Activated CD4-positive, alpha-beta memory T cell treated with anti-CD3 and anti-CD28 coated beads for 36 hours (primary cell): ENCODE measurements at regions of chr2 and their contacts with region 1.

Region 1: GRCh38 chr2:149167411-149167810 is 128.9 kb downstream of the LYPD6B start:
- DNase-seq: peak; percentile 71
- H3K4me3 Mint-ChIP-seq: no peak overlapping the region
- H3K27ac Mint-ChIP-seq: no peak overlapping the region
- H3K4me1 Mint-ChIP-seq: peaks cover 19% of the 10 kb centered on the region
- H3K27me3 Mint-ChIP-seq: peaks cover 10% of the 10 kb centered on the region

Region 2: GRCh38 chr2:149068996-149069888 is 98.2 kb before region 1 on chr2:
- CTCF ChIA-PET with region 1: no interaction called
- POLR2A ChIA-PET with region 1: no interaction called
- intact Hi-C with region 1: loop called (anchors 5 kb)
- DNase-seq: peak; percentile 42
- H3K4me3 Mint-ChIP-seq: no peak overlapping the region
- H3K27ac Mint-ChIP-seq: no peak overlapping the region
- H3K4me1 Mint-ChIP-seq: peaks cover 19% of the 10 kb centered on the region
- H3K27me3 Mint-ChIP-seq: peaks cover 1% of the 10 kb centered on the region